PC-3 (cell line): ENCODE measurements at regions of chr22 and their contacts with region 1.

Region 1: DNA sequence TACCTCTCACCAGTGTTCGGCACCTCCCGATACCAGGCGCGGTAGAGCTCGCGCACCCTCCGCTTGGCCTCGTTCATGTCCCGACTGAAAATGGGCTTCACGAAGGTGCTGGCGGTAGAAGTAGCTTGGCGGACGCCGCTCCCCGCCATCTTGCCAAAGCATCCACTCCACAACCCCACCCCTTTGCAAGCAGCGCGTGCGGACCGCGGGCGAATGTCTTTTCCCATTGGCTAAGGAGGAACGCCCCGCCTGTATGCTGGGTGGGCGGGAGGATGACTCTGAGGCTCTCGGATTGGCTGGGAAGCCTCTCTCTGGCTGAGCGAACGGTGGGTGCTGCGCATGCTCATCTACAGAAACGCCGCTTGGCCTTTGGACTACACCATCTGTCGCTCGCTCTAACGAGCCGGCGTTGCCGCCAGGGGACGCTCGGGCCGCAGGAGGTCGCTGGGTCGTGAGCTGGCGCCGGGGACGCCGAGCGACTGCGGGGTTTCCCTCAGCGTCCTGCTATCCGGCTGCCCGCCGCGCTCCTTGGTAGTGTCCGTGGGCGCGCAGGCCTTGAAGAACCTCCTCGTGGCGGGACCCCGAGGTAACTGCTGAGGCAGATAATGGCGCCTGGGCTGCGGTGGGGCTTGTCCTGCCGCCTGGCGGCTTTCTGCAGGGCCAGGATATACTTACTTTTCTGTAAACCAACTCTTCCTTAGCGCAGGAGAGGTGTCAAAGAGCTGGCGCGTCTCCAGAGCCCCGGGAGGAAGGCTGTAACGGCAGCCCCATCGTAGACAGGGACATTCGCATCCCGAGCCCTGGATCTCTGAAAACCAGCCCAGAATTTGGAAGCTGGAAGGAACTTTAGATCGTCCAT is at the start of gene NDUFA6:
- DNase-seq: peak; percentile 98
- ATAC-seq: peak; percentile 94
- H3K4me3 ChIP-seq: peak within 1 kb of the TSS; percentile 80
- H3K27ac ChIP-seq: peak within 1 kb of the TSS; percentile 86
- H3K4me1 ChIP-seq: peaks cover 9% of the 10 kb centered on the region; the same call in 1 of the 2 replicates
- H3K27me3 ChIP-seq: no peaks in the 10 kb centered on the region
- CTCF ChIP-seq: peak; percentile 79
- total RNA-seq, gene NDUFA6: 91.5 and 118 TPM in 2 replicates

Region 2: GRCh38 chr22:42079319-42080251 is 11.2 kb before region 1 on chr22 and contains the start of gene SMDT1:
- CTCF ChIA-PET with region 1: no interaction called
- POLR2A ChIA-PET with region 1: interaction called, 3 read pairs
- intact Hi-C with region 1: loop called (anchors 1 kb)
- DNase-seq: peak; percentile 95
- ATAC-seq: peak; percentile 90
- H3K4me3 ChIP-seq: peak within 1 kb of the TSS; percentile 95
- H3K27ac ChIP-seq: peak within 1 kb of the TSS; percentile 76
- H3K4me1 ChIP-seq: peaks cover 10% of the 10 kb centered on the region
- H3K27me3 ChIP-seq: no peaks in the 10 kb centered on the region
- CTCF ChIP-seq: no peak
- total RNA-seq, gene SMDT1: 17.5 and 18.3 TPM in 2 replicates

Region 3: DNA sequence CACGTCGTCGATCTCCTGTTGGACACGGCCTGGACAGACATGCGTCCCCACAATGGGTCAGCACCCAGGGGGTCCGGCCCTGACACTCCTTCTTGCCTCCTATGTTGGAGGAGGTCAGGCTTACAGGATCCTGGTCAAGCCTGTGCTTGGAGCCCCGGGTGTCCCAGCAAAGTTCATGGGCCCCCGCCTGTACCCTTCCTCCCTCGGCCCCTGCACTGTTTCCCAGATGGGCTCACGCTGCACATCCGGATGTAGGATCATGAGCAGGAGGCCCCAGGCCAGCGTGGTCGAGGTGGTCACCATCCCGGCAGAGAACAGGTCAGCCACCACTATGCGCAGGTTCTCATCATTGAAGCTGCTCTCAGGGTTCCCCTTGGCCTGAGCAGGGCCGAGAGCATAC is 36.8 kb after region 1 on chr22:
- CTCF ChIA-PET with region 1: no interaction called
- POLR2A ChIA-PET with region 1: no interaction called
- intact Hi-C with region 1: no loop called
- DNase-seq: no peak
- ATAC-seq: no peak
- H3K4me3 ChIP-seq: no peak overlapping the region
- H3K27ac ChIP-seq: no peak overlapping the region
- H3K4me1 ChIP-seq: no peaks in the 10 kb centered on the region
- H3K27me3 ChIP-seq: no peaks in the 10 kb centered on the region
- CTCF ChIP-seq: no peak

Region 4: DNA sequence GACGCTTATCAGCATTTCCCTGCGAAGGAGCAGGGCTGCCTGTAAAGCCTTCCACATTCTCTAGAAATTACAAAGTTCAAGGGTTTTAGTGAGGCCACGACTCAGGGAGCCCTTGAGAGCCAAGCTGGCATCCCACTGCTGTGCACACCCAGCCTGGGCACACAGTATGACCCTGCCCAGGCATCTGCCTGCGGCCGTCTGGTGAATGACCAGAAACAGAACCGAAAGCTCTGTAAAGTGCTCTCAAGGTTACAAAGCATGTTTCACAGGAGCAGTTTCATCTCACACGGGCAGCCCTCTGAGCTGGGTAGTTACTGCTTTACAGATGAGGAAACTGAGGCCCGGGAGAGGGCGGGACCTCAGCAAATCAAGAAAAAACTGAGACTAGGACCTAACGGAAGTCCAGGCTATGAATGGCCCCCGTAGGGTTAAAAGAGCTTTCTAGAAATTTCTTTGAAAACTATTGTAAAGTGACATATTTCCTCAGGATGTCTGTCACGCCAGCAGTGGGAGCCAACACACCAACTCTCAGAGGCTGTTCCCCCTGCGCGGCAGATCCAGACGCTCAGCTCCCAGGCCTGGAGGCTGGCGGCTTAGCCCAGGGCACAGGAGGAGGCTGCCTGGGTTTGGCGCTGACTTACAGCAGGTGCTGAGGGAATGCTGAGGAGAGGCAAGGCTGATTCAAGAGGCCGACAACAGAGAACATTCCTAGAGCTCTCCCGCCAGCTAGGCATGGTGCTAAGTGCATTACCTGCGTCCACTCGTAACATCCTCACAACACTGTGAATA is 187.4 kb after region 1 on chr22:
- CTCF ChIA-PET with region 1: no interaction called
- POLR2A ChIA-PET with region 1: no interaction called
- intact Hi-C with region 1: no loop called
- DNase-seq: no peak
- ATAC-seq: no peak
- H3K4me3 ChIP-seq: no peak overlapping the region
- H3K27ac ChIP-seq: no peak overlapping the region
- H3K4me1 ChIP-seq: no peaks in the 10 kb centered on the region
- H3K27me3 ChIP-seq: no peaks in the 10 kb centered on the region
- CTCF ChIP-seq: no peak

Region 5: DNA sequence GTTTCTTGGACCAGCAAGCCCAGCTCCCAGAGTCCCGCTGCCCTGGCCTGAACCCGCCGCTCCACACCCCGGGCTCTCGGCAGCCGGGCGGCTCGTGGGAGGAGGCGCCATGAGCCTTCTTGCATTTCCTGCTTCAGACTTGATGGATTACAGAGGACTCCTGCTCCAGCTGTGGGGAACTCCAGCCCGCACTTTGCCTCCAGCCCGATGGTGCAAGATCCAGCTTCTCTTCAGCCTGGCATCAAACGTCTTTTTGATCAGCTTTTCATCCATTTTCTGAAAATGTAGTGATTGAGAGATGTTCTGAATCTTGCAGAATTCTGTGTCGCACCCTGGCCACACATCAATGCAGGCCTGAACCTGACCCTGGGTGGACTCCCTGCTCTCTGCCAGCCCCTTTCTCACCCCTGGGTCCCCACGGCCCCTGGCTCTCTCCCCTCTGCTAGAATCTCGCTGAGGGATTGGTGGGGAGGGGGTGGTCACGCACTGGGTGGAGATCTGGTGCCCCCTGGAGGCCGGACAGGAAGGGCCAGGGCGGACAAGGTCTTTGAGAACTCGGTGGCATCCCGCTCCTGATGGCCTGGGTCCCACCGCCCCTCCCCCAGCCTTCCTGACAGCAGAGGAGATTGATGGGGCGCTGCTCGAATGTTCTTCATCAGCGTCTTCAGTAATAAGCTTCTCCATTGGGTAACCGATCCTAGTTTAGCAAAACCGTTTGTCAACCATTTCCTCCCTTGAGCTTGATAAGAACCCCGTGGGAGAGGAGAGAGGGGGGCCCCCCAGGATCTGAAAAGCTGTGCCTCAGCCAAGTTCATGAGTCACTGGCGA is 353.5 kb after region 1 on chr22:
- CTCF ChIA-PET with region 1: no interaction called
- POLR2A ChIA-PET with region 1: no interaction called
- intact Hi-C with region 1: loop called (anchors 2 kb)
- DNase-seq: peak; percentile 78
- ATAC-seq: peak; percentile 68
- H3K4me3 ChIP-seq: peak overlapping the region; percentile 62
- H3K27ac ChIP-seq: no peak overlapping the region; the same call in 1 of the 2 replicates
- H3K4me1 ChIP-seq: peaks cover 20% of the 10 kb centered on the region
- H3K27me3 ChIP-seq: no peaks in the 10 kb centered on the region
- CTCF ChIP-seq: peak; percentile 73

Region 6: DNA sequence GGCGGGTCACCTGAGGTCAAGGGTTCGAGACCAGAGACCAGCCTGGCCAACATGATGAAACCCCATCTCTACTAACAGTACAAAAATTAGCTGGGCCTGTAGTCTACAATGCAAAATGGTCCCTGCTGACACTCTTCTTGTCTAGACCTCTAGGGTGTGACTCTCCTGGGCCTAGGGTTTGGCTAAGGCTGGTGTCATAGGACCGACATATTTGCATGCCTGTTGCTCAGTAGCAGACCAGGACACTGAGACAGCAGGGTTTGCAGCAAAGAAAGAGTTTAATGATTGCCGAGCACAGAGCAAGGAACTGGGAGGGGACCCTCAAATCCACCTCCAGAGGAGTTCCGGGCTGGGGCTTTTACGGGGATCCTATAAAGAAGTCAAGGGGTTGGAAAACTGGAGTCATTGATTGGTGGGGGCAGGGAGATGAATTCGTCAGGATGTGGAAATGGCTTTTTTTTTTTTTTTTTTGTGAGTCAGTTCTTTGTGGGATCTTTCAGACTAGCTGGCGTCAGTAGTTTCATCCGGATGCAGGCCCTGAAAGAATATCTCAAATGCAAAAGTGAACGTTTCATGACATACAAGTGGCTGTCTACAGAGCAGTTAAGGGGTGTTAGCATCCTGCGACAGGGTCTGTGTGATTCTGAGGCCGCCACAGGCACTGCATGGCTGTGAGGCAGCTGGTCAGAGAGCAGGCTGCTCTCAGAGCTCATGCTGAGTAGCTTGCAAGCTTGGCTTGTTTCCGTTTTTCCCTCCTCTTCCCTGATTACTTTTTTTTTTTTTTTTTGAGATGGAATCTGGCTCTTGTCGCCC is 657.1 kb after region 1 on chr22:
- CTCF ChIA-PET with region 1: no interaction called
- POLR2A ChIA-PET with region 1: no interaction called
- intact Hi-C with region 1: no loop called
- DNase-seq: no peak
- ATAC-seq: no peak
- H3K4me3 ChIP-seq: no peak overlapping the region
- H3K27ac ChIP-seq: no peak overlapping the region
- H3K4me1 ChIP-seq: no peaks in the 10 kb centered on the region
- H3K27me3 ChIP-seq: no peaks in the 10 kb centered on the region
- CTCF ChIP-seq: no peak